Heart right ventricle (tissue), 16 donors: ENCODE measurements at regions of chr19 and their contacts with region 1.

Region 1: DNA sequence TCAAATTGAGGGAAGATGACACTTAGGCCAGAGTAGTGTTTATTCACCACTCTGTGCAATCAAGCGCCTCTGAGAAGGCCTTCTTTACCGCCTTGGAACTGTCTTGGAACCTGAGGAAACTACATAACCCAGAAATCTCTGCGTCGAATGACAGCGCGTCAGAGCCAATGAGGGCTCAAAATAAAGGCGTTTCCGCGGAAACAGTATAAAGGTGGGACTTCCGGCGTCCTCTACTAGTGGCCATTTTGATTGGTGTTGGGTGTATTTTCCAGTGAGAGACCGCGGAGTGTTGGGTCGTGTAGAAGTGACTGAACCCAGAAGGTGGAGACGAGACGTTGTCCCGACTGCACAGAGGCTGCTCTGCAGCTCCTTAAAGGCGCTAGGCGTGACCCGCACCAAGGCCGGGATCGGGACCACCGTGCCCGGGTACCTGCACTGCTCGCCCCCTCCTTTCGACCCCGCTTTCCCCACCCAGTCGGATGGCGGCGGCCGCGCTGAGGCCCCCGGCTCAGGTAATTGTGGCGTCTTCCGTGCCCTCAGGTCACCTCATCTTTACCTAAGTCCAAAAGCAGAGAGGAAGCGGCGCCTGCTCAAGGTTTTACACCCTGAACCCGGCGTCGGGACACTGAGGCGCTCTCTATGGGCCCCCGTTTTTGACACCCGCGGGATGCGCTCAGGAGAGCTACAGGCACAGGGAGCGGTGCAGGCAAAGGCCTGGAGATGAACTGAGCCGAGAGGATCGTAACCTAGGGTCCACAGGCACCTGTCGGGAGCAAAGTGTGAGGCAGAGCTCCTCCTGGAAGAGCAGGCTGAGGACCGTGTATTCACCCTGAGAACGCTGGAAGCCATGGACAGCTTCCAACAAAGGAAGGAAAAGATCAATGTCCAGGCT is at the start of gene ZNF776:
- DNase-seq: peak; percentile 73 to 92
- ATAC-seq: peak; percentile 95 to 99 (median 99)
- H3K4me3 ChIP-seq: peak within 1 kb of the TSS; percentile 71 to 97 (median 88)
- H3K27ac ChIP-seq: peak within 1 kb of the TSS; percentile 55 to 94 (median 88)
- H3K4me1 ChIP-seq: peaks cover 0 to 36% (median 24%) of the 10 kb centered on the region in 9 donors
- H3K27me3 ChIP-seq: no peaks in the 10 kb centered on the region
- CTCF ChIP-seq: peak in 1 of 9 donors; percentile 21
- total RNA-seq, gene ZNF776: 9.5 to 18.0 (median 13.4) TPM

Region 2: DNA sequence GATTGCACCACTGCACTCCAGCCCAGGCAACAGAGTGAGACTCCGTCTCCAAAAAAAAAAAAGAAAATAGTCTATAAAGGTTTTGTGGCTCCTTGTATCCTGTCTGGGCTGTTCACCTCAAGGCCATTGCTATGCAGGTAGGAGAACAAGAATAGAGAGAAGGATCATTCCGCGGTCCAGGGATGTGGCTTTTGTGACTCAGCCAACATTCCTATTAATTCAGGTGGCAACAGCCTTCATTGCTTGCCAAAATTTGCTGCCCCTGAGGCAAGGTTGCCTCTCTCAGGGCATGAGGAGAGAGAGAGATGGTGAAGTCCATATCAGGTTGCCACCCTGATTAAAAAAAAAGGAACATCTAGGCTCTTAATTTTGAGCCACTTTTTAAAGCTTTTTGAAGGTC is 57.1 kb before region 1 on chr19:
- intact Hi-C with region 1: no loop called
- DNase-seq: no peak
- ATAC-seq: no peak
- H3K4me3 ChIP-seq: no peak overlapping the region
- H3K27ac ChIP-seq: no peak overlapping the region
- H3K4me1 ChIP-seq: no peaks in the 10 kb centered on the region
- H3K27me3 ChIP-seq: no peaks in the 10 kb centered on the region
- CTCF ChIP-seq: no peak

Region 3: DNA sequence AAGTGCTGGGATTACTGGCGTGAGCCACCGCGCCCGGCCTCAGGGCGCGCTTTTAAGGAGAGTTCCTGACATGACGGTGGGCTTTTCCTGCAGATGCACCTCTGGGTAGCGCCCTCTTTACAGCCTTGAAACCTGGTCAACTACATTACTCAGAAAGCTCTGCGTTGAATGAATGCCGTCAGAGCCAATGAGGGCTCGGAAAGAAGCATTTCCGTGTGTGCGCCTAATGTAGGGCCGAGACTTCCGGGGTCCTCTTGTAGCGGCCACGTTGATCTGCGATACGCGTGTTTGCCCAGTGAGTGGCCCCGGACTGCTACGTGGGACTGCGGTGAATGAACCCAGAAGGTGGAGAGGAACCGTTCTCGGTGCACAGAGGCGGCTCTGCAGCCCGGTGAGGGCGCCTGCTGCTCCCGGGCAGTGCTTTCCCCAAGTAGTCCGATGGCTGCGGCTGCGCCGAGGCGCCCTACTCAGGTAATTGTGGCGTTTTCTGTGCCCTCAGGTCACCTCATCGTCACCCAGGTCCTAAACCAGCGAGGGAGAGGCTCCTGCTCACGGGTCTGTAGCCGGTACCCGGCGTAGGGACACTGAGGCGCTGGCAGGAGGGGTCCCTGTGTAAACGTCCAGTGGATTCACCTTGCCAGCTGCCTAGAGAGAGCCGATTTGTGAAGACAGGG is 72.8 kb after region 1 on chr19:
- intact Hi-C with region 1: loop called in 1 of 10 experiments (anchors 5 kb)
- DNase-seq: peak; percentile 64 to 90
- ATAC-seq: peak; percentile 83 to 91 (median 90)
- H3K4me3 ChIP-seq: peak overlapping the region; percentile 62 to 92 (median 80)
- H3K27ac ChIP-seq: peak overlapping the region in 9 of 10 donors; percentile 59 to 89 (median 82)
- H3K4me1 ChIP-seq: peaks cover 4 to 52% (median 23%) of the 10 kb centered on the region in 9 donors
- H3K27me3 ChIP-seq: no peaks in the 10 kb centered on the region
- CTCF ChIP-seq: peak in 2 of 9 donors; percentile 31 to 34

Region 4: DNA sequence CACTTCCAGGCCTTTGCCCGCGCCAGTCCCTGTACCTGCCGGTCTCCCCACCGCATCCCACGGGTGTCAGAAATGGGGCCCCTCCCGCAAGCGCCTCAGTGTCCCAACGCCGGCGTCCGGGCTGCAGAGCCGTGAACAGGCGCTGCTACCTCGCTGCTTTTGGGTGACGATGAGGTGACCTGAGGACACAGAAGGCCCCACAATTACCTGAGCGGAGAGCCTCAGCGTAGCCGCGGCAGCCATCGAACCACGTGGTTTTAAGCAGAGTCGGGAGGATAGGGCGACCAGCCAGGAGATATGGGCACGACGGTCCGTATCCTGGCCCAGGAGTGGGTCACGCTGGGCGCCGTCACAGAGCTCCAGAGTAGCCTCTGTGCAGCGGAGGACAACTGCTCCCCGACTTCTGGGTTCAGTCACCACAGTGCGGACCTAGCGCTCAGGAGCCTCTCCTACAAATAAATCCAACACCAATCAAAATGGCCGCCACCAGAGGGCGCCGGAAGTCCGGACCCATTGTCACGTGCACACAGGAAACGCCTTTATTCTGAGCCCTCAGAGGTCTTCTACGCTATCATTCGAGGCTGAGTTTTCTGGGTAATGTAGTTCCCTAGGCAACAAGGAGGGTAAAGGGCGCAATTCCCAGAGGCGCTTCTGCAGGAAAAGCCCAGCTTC is 141.9 kb after region 1 on chr19 and contains the start of gene ZNF814:
- intact Hi-C with region 1: loop called in 2 of 10 experiments (anchors 10 kb)
- DNase-seq: peak; percentile 81 to 92
- ATAC-seq: peak; percentile 92 to 98 (median 96)
- H3K4me3 ChIP-seq: peak within 1 kb of the TSS; percentile 49 to 96 (median 78)
- H3K27ac ChIP-seq: peak within 1 kb of the TSS in 9 of 10 donors; percentile 69 to 88 (median 76)
- H3K4me1 ChIP-seq: peaks cover 0 to 35% (median 13%) of the 10 kb centered on the region in 9 donors
- H3K27me3 ChIP-seq: no peaks in the 10 kb centered on the region
- CTCF ChIP-seq: peak in 8 of 9 donors; percentile 36 to 77 (median 64)
- total RNA-seq, gene ZNF814: 6.2 to 14.8 (median 12.6) TPM

Region 5: DNA sequence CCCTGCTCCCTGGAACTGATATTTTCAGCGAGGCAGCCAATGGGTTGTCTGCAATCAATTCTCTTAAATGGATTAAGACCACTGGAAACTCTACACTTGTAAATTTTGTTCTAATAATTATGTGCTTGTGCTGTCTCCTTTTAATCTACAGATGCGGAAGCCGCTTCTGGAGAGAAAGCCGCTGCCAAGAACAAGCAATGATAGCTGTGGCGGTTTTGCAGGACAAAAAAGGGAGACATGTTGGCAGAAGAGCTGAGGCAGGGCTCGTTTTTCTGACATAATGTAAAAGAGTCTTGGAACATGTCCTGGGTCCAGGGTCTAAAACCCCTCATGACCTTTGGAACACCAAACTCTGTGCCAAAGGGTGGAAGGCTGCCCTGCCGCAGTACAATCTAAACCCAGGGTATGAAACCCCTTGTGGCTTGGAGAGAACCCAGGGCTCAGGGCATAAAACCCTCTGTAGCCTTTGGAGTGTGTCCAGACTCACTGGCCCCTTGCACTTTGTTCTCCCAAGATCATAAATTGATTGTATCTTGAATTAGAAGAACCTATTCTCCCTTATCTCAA is 156.9 kb after region 1 on chr19:
- intact Hi-C with region 1: loop called in 2 of 10 experiments (anchors 10 kb)
- DNase-seq: no peak
- ATAC-seq: no peak
- H3K4me3 ChIP-seq: no peak overlapping the region
- H3K27ac ChIP-seq: no peak overlapping the region
- H3K4me1 ChIP-seq: peaks cover 0 to 5% (median 0%) of the 10 kb centered on the region in 9 donors
- H3K27me3 ChIP-seq: no peaks in the 10 kb centered on the region
- CTCF ChIP-seq: no peak